AG04449 (cell line): ENCODE measurements at regions of chr7 and their contacts with region 1.

Region 1: DNA sequence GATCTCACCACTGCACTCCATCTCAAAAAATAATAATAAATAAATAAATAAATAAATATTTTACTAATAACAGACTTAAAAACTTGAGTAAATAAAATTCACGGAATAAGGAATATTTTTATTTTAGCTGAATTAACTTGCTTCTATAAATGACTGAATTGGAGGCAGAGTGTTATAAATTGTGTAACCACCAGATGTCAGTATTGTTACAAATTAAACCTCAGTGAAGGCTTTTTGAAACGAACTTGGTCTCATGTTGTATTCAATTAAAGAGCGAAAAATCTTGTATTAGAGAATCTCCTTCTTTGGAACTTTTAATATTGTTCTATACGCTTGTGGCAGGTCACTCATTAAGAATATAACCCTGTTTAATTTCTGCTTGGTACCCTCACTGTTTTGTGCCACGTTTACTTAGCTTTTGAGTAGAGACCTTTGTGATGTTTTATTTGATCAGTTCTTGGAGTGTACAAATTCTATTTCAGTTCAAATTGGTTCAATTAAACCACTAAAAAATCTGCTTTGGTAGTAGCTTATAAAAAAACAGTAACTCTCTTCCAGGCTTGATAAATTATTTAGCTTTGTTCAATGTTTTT is 45.6 kb upstream of the SCIN start:
- DNase-seq: peak; percentile 10
- H3K4me3 ChIP-seq: no peak overlapping the region
- CTCF ChIP-seq: peak; percentile 24

Region 2: DNA sequence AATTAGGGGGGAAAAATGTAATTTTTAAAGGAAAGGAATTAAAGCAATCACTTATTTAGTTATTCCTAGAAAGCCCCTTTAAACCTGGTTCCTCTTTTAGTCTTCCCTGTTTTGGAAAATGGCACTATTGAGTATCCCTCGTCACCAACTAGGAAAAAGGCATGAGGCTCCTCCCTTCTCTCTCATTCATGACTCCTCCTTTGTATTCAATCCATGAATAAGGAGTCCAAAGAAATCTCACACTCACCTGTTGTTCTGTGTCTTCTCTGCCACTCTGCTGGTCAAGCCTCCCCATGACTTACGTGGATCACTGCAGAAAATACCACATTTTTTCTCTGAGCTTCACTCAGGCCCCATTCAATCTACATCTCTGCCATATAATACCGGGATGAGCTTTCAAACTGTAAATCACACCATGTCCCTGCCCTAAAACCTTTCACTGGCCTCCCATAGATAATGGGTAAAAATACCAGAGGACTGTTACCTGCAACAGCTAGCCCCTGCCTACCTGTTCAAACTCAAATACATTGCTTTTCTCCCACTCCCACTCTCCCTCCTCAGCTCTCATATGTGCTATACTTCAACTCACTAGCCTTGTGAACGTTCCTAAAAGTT is 115.7 kb before region 1 on chr7:
- CTCF ChIA-PET with region 1: no interaction called
- POLR2A ChIA-PET with region 1: no interaction called
- DNase-seq: no peak
- H3K4me3 ChIP-seq: no peak overlapping the region
- CTCF ChIP-seq: no peak

Region 3: GRCh38 chr7:12540850-12541249 is 16.0 kb after region 1 on chr7:
- CTCF ChIA-PET with region 1: interaction called, 17 read pairs
- POLR2A ChIA-PET with region 1: no interaction called
- DNase-seq: peak; percentile 9
- H3K4me3 ChIP-seq: no peak overlapping the region
- CTCF ChIP-seq: no peak

Region 4: GRCh38 chr7:12623897-12624498 is 99.1 kb after region 1 on chr7:
- CTCF ChIA-PET with region 1: interaction called, 68 read pairs
- POLR2A ChIA-PET with region 1: no interaction called
- DNase-seq: no peak
- H3K4me3 ChIP-seq: no peak overlapping the region
- CTCF ChIP-seq: peak; percentile 54

Region 5: DNA sequence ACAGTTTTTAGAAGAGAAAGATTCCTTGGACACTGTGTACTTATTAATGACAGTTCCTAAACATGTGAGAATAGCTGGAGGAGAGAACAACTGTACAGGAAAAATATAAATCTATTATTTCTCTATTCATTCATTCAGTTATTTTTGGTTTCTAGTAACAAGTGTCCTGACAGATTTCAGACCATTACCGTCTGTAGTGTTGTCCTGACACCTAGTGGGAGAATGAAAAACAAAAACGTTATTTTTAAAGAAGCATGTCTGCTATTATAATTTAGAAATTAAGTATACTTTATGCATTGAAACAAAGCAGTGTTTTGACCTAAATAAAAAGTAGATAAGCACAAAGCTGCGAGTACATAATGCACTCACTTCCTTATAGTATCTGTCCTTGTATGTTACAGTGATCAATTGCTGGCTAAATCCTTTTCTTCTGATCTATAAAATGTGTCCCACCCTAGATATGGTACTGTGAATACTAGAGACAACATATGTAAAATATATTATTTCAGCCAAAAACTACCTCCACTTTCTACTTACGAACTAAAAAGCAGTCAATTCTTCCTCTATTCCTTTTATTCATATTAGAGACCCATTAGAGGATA is 738.1 kb after region 1 on chr7:
- CTCF ChIA-PET with region 1: interaction called, 10 read pairs
- POLR2A ChIA-PET with region 1: no interaction called
- DNase-seq: no peak
- H3K4me3 ChIP-seq: no peak overlapping the region
- CTCF ChIP-seq: peak; percentile 8